PC-9 (cell line): ENCODE measurements at regions of chr15 and their contacts with region 1.

Region 1: DNA sequence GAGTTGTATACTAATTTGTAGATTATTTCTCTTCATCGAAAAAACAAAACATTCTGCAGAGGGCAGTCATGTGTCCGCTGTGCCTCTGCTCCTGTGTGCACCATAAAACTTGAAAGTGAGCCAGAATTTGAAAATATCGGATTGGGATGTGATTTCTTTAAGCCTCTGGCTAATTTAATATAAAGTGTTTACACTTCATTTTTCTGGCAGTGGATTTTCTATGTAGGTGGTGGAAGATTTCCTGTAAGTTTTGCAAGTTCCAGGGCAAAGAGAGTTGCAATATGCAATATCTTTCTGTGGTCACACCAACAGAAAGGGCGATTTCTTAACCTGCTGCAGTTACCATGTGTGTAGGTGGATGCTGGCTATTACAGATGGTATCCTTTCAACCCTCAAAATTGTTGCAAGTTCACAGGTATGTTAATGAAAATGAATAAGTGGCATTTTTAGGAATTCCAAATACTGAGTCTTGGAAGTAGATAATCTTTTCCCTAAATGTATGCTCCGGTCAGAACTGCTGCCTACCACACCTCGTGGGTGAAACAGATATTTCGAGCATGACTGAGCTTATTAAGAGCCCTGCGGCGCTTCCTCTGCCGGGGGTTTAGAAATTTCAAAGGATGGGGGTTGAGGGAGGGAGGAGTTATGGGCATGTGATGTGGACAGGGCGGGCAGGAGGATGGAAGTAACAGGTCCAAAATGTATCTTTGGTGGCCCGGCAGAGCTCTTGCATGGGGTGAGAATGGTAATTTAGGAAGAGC is 134.0 kb downstream of the PGPEP1L start:
- DNase-seq: peak; percentile 79 to 92
- H3K4me3 ChIP-seq: peak overlapping the region; percentile 44
- H3K27ac ChIP-seq: peak overlapping the region; percentile 95
- H3K4me1 ChIP-seq: peaks cover 80% of the 10 kb centered on the region
- H3K27me3 ChIP-seq: no peaks in the 10 kb centered on the region
- CTCF ChIP-seq: no peak

Region 2: GRCh38 chr15:98884894-98885293 is 11.3 kb after region 1 on chr15:
- CTCF ChIA-PET with region 1: no interaction called
- POLR2A ChIA-PET with region 1: interaction called, 11 read pairs
- intact Hi-C with region 1: no loop called
- DNase-seq: no peak
- H3K4me3 ChIP-seq: no peak overlapping the region
- H3K27ac ChIP-seq: no peak overlapping the region
- H3K4me1 ChIP-seq: peaks cover 18% of the 10 kb centered on the region
- H3K27me3 ChIP-seq: no peaks in the 10 kb centered on the region
- CTCF ChIP-seq: no peak